ENCODE measurements at regions of chr5 and their contacts with region 1.

Region 1: DNA sequence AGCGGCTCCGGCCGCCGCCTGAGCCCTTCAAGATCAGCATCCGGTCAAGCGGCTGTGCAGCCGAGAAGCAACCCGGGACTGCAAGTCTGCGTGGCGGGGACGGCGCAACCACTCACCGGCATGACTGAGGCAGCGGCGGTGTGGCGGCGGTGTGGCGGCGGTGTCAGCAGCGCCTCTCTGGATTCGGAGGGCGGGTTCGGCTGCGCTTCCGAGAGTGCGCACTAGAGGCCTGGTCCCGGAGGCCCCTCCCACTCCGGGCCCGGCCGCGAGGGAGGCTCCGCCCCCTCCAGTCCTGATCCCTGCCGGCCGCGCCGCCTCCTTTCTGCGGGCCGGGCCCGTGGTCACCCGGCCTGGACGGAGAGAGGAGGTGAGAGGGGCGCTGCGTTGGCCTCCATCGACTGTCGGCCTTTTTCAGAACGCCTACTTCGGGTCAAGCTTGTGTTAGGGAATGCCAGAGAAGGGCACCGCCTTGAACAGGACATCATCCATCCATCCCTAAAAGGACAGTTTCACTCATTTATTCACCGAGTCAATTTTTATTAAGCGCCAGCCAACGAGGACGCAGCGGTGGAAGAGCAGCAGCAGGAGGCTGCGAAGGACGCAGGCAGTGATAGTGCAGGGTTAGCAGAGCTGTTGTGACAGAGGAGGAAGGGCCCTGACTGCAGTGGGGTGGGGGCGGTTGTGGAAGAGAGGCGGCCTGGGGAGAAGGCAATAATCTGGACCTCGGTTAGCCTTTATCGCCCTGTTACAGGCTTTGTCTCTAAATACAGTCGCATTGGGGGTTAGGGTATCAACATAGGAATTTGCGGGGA is at the start of gene ATOX1:
- DNase-seq: peak; percentile 90
- H3K4me3 Mint-ChIP-seq: peak within 1 kb of the TSS; percentile 87
- H3K27ac Mint-ChIP-seq: peak within 1 kb of the TSS; percentile 92
- H3K4me1 Mint-ChIP-seq: peaks cover 43% of the 10 kb centered on the region
- H3K27me3 Mint-ChIP-seq: no peaks in the 10 kb centered on the region
- total RNA-seq, gene ATOX1: 72.5 and 83.7 TPM in 2 replicates

Region 2: GRCh38 chr5:151740336-151740942 is 18.2 kb before region 1 on chr5:
- intact Hi-C with region 1: loop called (anchors 1 kb)
- DNase-seq: peak; percentile 37
- H3K4me3 Mint-ChIP-seq: no peak overlapping the region
- H3K27ac Mint-ChIP-seq: no peak overlapping the region
- H3K4me1 Mint-ChIP-seq: peaks cover 23% of the 10 kb centered on the region
- H3K27me3 Mint-ChIP-seq: no peaks in the 10 kb centered on the region

Region 3: DNA sequence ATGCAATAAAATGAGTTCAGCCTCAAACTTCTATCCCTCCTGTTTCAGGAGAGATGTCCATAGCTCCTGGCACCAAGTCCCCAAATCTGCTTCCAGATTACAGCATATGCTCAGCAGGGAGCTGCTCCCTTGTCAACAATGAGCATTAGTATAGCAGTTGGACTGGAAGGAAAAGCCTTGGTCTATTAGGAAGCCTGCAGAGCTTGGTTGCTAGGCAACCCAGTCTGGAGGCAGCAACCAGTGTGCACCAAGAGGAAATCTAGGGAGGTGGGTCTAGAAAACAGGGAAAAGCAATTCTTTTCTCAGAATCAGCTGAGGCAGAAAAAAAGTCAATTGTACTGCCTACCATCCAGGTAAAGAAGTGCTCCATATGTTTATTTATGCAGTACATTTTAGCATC is 876.0 kb after region 1 on chr5:
- intact Hi-C with region 1: no loop called
- DNase-seq: no peak
- H3K4me3 Mint-ChIP-seq: no peak overlapping the region
- H3K27ac Mint-ChIP-seq: no peak overlapping the region
- H3K4me1 Mint-ChIP-seq: no peaks in the 10 kb centered on the region
- H3K27me3 Mint-ChIP-seq: no peaks in the 10 kb centered on the region

Measured in activated T-helper 1 cell treated with anti-CD3 and anti-CD28 coated beads, Interleukin-12 subunit alpha, Interleukin-12 subunit beta, Interleukin-2, Interleukin-4 antibody, amounts not matched to agents 30 ng/mL and 10 ng/mL and 1 ng/mL, durations not matched to agents 14 hours and 24 hours and 36 hours (primary cell).